ENCODE measurements at regions of chr1 and their contacts with region 1.

Region 1: DNA sequence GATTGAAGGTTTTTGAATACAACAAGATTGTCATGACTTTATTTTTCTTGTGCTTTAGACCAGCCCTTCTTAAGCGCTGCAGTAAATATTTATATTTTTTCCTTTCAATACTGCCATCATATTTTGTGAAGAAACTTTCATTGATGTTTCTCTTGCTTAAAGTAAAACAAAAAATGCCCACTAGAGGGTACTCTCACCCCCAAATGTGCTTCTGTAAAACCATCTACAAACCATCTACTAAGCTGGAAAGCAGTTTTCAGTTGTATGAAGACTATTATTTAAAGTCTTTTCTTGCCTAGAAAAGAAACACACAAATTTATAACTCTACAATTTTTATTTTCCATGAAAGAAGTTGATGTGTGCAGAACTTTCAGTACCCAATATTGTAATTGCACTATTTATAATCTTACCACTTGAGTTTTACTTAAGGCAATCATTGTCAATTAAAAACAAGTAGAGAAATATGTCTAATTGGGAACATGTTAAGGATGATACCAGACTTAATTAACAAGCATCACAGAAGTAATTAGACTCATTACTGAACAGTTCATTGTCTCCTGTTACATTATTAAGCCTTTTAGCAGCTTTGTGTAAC is 10.7 kb downstream of the LEPR start:
- DNase-seq: peak in 5 of 9 donors; percentile 32 to 43 (median 33)
- ATAC-seq: peak; percentile 67
- H3K4me3 ChIP-seq: no peak overlapping the region
- H3K4me3 Mint-ChIP-seq: no peak overlapping the region
- H3K27ac ChIP-seq: no peak overlapping the region
- H3K27ac Mint-ChIP-seq: no peak overlapping the region
- H3K4me1 ChIP-seq: no peaks in the 10 kb centered on the region
- H3K4me1 Mint-ChIP-seq: peaks cover 0 to 28% (median 3%) of the 10 kb centered on the region in 7 donors
- H3K27me3 ChIP-seq: no peaks in the 10 kb centered on the region
- H3K27me3 Mint-ChIP-seq: no peaks in the 10 kb centered on the region

Region 2: GRCh38 chr1:65235867-65236805 is 195.1 kb before region 1 on chr1:
- CTCF ChIA-PET with region 1: no interaction called
- POLR2A ChIA-PET with region 1: no interaction called
- intact Hi-C with region 1: loop called in 1 of 2 experiments (anchors 1 kb)
- DNase-seq: peak in 4 of 9 donors; percentile 12 to 28 (median 22)
- ATAC-seq: peak; percentile 54
- H3K4me3 ChIP-seq: no peak overlapping the region
- H3K4me3 Mint-ChIP-seq: no peak overlapping the region
- H3K27ac ChIP-seq: no peak overlapping the region
- H3K27ac Mint-ChIP-seq: no peak overlapping the region
- H3K4me1 ChIP-seq: no peaks in the 10 kb centered on the region
- H3K4me1 Mint-ChIP-seq: peaks cover 2 to 18% (median 2%) of the 10 kb centered on the region in 7 donors
- H3K27me3 ChIP-seq: no peaks in the 10 kb centered on the region
- H3K27me3 Mint-ChIP-seq: peaks cover 6 to 23% (median 14%) of the 10 kb centered on the region in 5 donors

Region 3: GRCh38 chr1:65850281-65850680 is 419.1 kb after region 1 on chr1:
- CTCF ChIA-PET with region 1: no interaction called
- POLR2A ChIA-PET with region 1: no interaction called
- intact Hi-C with region 1: no loop called
- DNase-seq: no peak
- ATAC-seq: no peak
- H3K4me3 ChIP-seq: no peak overlapping the region
- H3K4me3 Mint-ChIP-seq: no peak overlapping the region
- H3K27ac ChIP-seq: no peak overlapping the region
- H3K27ac Mint-ChIP-seq: no peak overlapping the region
- H3K4me1 ChIP-seq: no peaks in the 10 kb centered on the region
- H3K4me1 Mint-ChIP-seq: no peaks in the 10 kb centered on the region
- H3K27me3 ChIP-seq: no peaks in the 10 kb centered on the region
- H3K27me3 Mint-ChIP-seq: peaks cover 0 to 12% (median 5%) of the 10 kb centered on the region in 5 donors